B cell (primary cell): ENCODE measurements at regions of chr4 and their contacts with region 1.

Region 1: GRCh38 chr4:99054428-99054994 is 34.1 kb downstream of the ADH5 start:
- DNase-seq: no peak
- ATAC-seq: no peak
- H3K4me3 ChIP-seq: no peak overlapping the region
- H3K4me3 Mint-ChIP-seq: no peak overlapping the region
- H3K27ac ChIP-seq: no peak overlapping the region
- H3K27ac Mint-ChIP-seq: peak overlapping the region; percentile 46
- H3K4me1 ChIP-seq: no peaks in the 10 kb centered on the region
- H3K4me1 Mint-ChIP-seq: peaks cover 14% of the 10 kb centered on the region
- H3K27me3 ChIP-seq: no peaks in the 10 kb centered on the region
- H3K27me3 Mint-ChIP-seq: no peaks in the 10 kb centered on the region
- CTCF ChIP-seq: no peak

Region 2: GRCh38 chr4:98939892-98940298 is 114.6 kb before region 1 on chr4:
- CTCF ChIA-PET with region 1: interaction called, 10 read pairs
- POLR2A ChIA-PET with region 1: no interaction called
- intact Hi-C with region 1: no loop called
- DNase-seq: peak; percentile 47
- ATAC-seq: no peak
- H3K4me3 ChIP-seq: no peak overlapping the region
- H3K4me3 Mint-ChIP-seq: no peak overlapping the region
- H3K27ac ChIP-seq: no peak overlapping the region
- H3K27ac Mint-ChIP-seq: no peak overlapping the region
- H3K4me1 ChIP-seq: no peaks in the 10 kb centered on the region
- H3K4me1 Mint-ChIP-seq: peaks cover 1% of the 10 kb centered on the region
- H3K27me3 ChIP-seq: no peaks in the 10 kb centered on the region
- H3K27me3 Mint-ChIP-seq: no peaks in the 10 kb centered on the region
- CTCF ChIP-seq: peak; percentile 74

Region 3: GRCh38 chr4:99029018-99029735 is 25.3 kb before region 1 on chr4:
- CTCF ChIA-PET with region 1: interaction called, 11 read pairs
- POLR2A ChIA-PET with region 1: no interaction called
- intact Hi-C with region 1: no loop called
- DNase-seq: no peak
- ATAC-seq: no peak
- H3K4me3 ChIP-seq: no peak overlapping the region
- H3K4me3 Mint-ChIP-seq: peak overlapping the region; percentile 44
- H3K27ac ChIP-seq: peak overlapping the region in 1 of 2 donors; percentile 67
- H3K27ac Mint-ChIP-seq: peak overlapping the region; percentile 67
- H3K4me1 ChIP-seq: peaks cover 9 to 17% of the 10 kb centered on the region in 2 donors
- H3K4me1 Mint-ChIP-seq: peaks cover 52% of the 10 kb centered on the region
- H3K27me3 ChIP-seq: no peaks in the 10 kb centered on the region
- H3K27me3 Mint-ChIP-seq: no peaks in the 10 kb centered on the region
- CTCF ChIP-seq: no peak

Region 4: DNA sequence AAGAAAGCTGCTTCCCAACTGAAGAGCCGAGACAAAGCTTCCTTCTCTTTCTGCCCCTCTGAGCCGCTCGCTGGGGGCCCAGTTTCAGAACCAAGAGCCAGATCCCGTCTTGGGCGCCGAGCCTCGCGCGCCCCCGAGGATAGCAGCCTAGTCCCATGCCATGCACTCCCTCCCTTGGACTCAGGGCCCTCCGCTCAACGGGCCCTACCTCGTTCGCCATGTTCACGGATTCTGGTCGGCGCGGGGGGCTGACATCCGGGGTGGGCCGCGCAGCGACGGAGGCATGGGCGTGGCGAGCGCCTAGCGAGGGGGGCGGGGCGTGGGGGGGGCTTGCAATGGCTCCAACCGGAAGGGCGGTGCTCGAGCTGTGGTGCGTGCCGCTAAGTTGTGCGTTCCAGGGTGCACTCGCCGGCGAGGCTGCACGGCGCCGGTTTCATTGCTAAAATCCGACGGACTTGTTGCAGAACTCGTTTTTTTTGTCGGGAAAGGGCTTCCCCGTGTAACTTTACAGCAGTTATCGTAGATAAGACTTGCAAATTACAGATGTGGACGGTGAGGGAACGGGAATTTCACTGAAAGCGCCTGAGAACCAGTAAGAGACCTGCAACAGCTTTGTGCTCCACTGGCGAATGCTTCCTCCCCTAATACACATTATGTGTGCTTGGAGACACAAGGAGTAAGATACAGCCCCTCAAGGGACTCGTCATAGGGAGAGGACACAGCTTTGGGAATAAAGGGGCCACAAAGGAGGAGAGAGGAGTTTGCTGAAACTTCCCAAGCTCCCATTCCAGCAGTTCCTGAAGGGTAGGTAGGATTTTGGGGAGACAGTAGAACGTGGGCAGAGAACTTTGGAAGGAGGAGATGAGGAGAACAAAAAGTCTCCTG is 34.2 kb after region 1 on chr4 and contains the start of gene ADH5:
- CTCF ChIA-PET with region 1: interaction called, 10 read pairs
- POLR2A ChIA-PET with region 1: interaction called, 7 read pairs
- intact Hi-C with region 1: no loop called
- DNase-seq: peak; percentile 90
- ATAC-seq: peak; percentile 95
- H3K4me3 ChIP-seq: peak within 1 kb of the TSS; percentile 75 to 99 (median 96)
- H3K4me3 Mint-ChIP-seq: peak within 1 kb of the TSS; percentile 98
- H3K27ac ChIP-seq: peak within 1 kb of the TSS; percentile 84
- H3K27ac Mint-ChIP-seq: peak within 1 kb of the TSS; percentile 98
- H3K4me1 ChIP-seq: peaks cover 15 to 25% of the 10 kb centered on the region in 2 donors
- H3K4me1 Mint-ChIP-seq: peaks cover 46% of the 10 kb centered on the region
- H3K27me3 ChIP-seq: no peaks in the 10 kb centered on the region
- H3K27me3 Mint-ChIP-seq: no peaks in the 10 kb centered on the region
- CTCF ChIP-seq: no peak
- total RNA-seq, gene ADH5: 59.2 and 65.6 TPM in 2 replicates